GM12878 (cell line): ENCODE measurements at regions of chr4 and their contacts with region 1.

Region 1: GRCh38 chr4:184395971-184396391 is 78.4 kb downstream of the IRF2 start:
- DNase-seq: peak; percentile 81
- ATAC-seq: peak; percentile 89
- H3K4me3 ChIP-seq: peak overlapping the region; percentile 29
- H3K27ac ChIP-seq: peak overlapping the region; percentile 76
- H3K4me1 ChIP-seq: peaks cover 29% of the 10 kb centered on the region
- H3K27me3 ChIP-seq: no peaks in the 10 kb centered on the region
- CTCF ChIP-seq: no peak
- EP300 ChIP-seq: no peak
- POLR2A ChIP-seq: peak; percentile 63; the same call in 1 of the 2 replicates
- RAD21 ChIP-seq: no peak

Region 2: GRCh38 chr4:183808097-183808456 is 587.9 kb before region 1 on chr4:
- CTCF ChIA-PET with region 1: no interaction called
- POLR2A ChIA-PET with region 1: no interaction called
- RAD21 ChIA-PET with region 1: no interaction called
- SMC1A ChIA-PET with region 1: no interaction called
- in situ Hi-C with region 1: no loop called
- intact Hi-C with region 1: no loop called
- DNase-seq: no peak
- ATAC-seq: no peak
- H3K4me3 ChIP-seq: no peak overlapping the region
- H3K27ac ChIP-seq: no peak overlapping the region
- H3K4me1 ChIP-seq: no peaks in the 10 kb centered on the region
- H3K27me3 ChIP-seq: no peaks in the 10 kb centered on the region
- CTCF ChIP-seq: no peak
- EP300 ChIP-seq: no peak
- POLR2A ChIP-seq: no peak
- RAD21 ChIP-seq: no peak

Region 3: GRCh38 chr4:184355111-184355604 is 40.8 kb before region 1 on chr4:
- CTCF ChIA-PET with region 1: no interaction called
- POLR2A ChIA-PET with region 1: interaction called, 5 read pairs
- RAD21 ChIA-PET with region 1: interaction called, 22 read pairs
- SMC1A ChIA-PET with region 1: interaction called, 23 read pairs
- in situ Hi-C with region 1: no loop called
- intact Hi-C with region 1: no loop called
- DNase-seq: peak; percentile 84
- ATAC-seq: peak; percentile 15
- H3K4me3 ChIP-seq: no peak overlapping the region
- H3K27ac ChIP-seq: peak overlapping the region; percentile 99
- H3K4me1 ChIP-seq: peaks cover 16% of the 10 kb centered on the region
- H3K27me3 ChIP-seq: no peaks in the 10 kb centered on the region
- CTCF ChIP-seq: no peak
- EP300 ChIP-seq: peak; percentile 52 to 63; a peak in 2 of 4 replicates
- POLR2A ChIP-seq: no peak
- RAD21 ChIP-seq: peak; percentile 28